ENCODE measurements at regions of chr3 and their contacts with region 1.

Region 1: GRCh38 chr3:64533617-64534317 is 154.0 kb downstream of the ADAMTS9 start:
- DNase-seq: peak; percentile 89
- ATAC-seq: peak; percentile 97

Region 2: DNA sequence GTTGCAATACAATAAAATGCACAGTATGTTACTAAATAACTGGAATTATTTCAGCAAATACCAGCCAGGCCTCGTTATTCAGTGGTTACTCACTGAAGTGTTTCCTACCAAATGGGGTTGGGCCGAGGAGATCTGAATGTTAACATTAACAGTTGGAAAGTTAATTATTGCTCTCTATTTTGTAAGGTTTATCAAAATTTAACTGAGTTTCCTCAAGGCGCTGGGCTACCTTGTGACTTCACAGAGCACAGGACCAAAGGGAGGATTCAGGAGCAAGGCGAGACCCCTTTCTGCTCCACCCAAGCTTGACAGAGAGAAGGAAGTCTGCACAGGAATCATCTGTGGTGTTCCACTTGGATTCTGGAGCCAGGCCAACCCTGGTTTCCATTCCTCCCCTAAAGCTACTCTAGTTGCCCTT is 132.4 kb after region 1 on chr3:
- intact Hi-C with region 1: loop called (anchors 10 kb)
- DNase-seq: no peak
- ATAC-seq: no peak

Region 3: DNA sequence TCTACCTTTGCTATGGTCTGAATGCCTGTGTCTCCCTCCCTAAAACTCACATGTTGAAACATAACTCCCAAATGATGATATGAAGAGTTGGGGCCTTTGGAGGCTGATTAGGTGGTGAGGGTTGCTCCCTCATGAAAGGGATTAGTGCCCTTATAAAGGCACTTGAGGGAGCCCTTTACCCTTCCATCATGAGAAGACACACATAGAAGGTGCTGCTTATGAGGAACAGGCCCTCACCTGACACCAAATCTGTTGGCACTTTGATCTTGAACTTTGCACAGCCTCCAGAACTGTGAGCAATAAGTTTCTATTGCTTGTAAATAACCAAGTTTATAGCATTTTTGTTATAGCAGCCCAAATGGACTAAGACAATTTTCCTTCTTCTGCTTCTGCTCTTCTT is 230.2 kb after region 1 on chr3:
- intact Hi-C with region 1: loop called (anchors 5 kb)
- DNase-seq: no peak
- ATAC-seq: no peak

Region 4: GRCh38 chr3:65245133-65246063 is 711.6 kb after region 1 on chr3:
- intact Hi-C with region 1: loop called (anchors 10 kb)
- DNase-seq: no peak
- ATAC-seq: no peak

Region 5: DNA sequence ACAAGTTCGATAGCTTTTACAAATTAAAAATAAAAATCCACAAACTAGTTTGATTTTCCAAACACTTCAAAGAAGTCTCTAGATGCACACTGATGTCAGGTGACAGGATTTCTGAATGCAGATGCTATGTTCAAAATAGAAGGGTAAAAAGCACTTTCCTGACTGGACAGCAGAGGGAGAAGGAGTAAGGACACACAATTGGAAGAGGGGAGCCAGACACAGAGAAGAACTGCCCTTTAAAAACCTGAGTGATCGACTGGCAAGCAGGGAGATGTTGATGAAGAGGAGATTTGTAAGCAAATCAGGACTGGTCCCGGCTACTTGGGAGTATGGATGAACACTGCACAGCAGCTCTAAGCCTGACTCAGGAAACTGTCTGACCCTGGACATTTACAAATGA is 892.1 kb after region 1 on chr3:
- intact Hi-C with region 1: loop called (anchors 10 kb)
- DNase-seq: no peak
- ATAC-seq: peak; percentile 38

Measured in Right ventricle myocardium superior (tissue), 1 donor.